MCF 10A (cell line): ENCODE measurements at regions of chr7 and their contacts with region 1.

Region 1: DNA sequence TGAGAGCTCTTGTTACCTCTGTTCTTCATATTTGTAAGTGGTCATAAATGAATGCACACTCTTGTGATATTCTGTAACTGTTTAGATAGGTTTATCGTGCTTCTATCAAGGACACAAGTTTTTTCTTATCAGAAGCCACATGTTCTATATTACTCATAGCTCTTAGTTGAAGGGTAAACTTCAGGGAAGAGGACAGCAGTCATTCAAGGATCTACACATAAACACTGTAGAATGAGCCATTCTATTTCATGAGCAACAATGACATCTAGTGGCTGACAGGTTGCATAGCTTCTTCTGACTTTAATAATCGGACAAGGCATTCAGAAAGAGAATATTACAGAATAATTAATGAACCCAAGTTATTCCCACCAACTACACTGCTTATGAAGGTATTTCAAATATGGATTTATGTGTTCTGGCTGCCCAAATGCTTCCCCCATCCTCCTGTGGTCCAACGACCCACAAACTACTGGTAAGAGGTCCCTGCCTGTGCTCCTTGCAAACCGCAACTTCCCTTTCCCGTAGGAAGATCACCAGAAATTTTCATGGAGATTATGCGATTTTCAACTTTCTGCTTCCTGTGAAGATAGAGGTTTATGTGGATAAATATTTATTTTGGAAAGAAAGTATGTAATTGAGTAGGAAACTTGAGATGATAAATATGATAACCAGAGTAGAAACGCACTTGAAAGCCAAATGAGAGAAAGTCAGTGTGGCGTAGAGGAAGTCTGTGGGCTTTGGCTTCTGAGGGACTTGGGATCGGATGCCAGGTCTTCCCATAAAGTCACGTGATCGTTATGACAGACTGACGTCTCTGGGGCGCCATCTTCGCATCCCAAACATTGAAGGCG is 16.8 kb upstream of the ABCB5 start:
- DNase-seq: peak; percentile 72
- H3K4me3 Mint-ChIP-seq: no peak overlapping the region
- H3K27ac Mint-ChIP-seq: no peak overlapping the region
- H3K4me1 Mint-ChIP-seq: peaks cover 15% of the 10 kb centered on the region
- H3K27me3 Mint-ChIP-seq: no peaks in the 10 kb centered on the region
- CTCF ChIP-seq: peak; percentile 83

Region 2: GRCh38 chr7:19713676-19714075 is 885.0 kb before region 1 on chr7:
- CTCF ChIA-PET with region 1: interaction called, 121 read pairs
- POLR2A ChIA-PET with region 1: interaction called, 9 read pairs
- intact Hi-C with region 1: loop called (anchors 1 kb)
- DNase-seq: peak; percentile 58
- H3K4me3 Mint-ChIP-seq: no peak overlapping the region
- H3K27ac Mint-ChIP-seq: no peak overlapping the region
- H3K4me1 Mint-ChIP-seq: peaks cover 16% of the 10 kb centered on the region
- H3K27me3 Mint-ChIP-seq: no peaks in the 10 kb centered on the region
- CTCF ChIP-seq: peak; percentile 47

Region 3: DNA sequence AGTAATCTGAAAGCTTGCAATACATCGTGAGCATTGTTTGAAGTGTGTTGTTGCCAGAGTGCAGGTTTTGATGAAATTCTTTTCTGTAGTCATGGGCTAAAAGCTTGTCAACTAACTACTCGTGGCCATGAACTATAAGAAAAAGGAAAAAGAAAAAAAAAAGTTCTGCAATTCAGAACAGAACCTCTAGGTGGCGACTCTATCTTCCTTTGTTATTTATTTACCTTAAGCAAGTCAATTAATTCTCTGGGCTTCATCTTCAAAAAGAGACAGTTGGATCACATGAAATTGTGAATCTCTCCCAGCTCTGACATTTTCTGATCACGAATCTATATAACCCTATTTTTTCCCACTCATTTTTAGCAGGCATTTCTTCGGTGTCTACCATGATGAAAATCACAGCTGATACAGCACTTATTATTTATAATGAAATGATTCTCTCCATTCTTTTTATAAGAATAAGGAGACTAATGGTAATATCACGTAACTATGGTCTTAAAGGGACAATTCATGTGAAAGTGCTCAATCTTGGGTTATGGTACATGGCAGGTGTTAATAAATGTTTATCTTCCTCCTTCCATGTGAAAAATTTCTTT is 844.1 kb before region 1 on chr7:
- CTCF ChIA-PET with region 1: interaction called, 50 read pairs
- POLR2A ChIA-PET with region 1: interaction called, 3 read pairs
- intact Hi-C with region 1: no loop called
- DNase-seq: peak; percentile 56
- H3K4me3 Mint-ChIP-seq: no peak overlapping the region
- H3K27ac Mint-ChIP-seq: no peak overlapping the region
- H3K4me1 Mint-ChIP-seq: peaks cover 6% of the 10 kb centered on the region
- H3K27me3 Mint-ChIP-seq: no peaks in the 10 kb centered on the region
- CTCF ChIP-seq: peak; percentile 53

Region 4: GRCh38 chr7:20310963-20311742 is 287.5 kb before region 1 on chr7:
- CTCF ChIA-PET with region 1: interaction called, 7 read pairs
- POLR2A ChIA-PET with region 1: interaction called, 6 read pairs
- intact Hi-C with region 1: loop called (anchors 1 kb)
- DNase-seq: peak; percentile 64
- H3K4me3 Mint-ChIP-seq: no peak overlapping the region
- H3K27ac Mint-ChIP-seq: no peak overlapping the region
- H3K4me1 Mint-ChIP-seq: peaks cover 12% of the 10 kb centered on the region
- H3K27me3 Mint-ChIP-seq: no peaks in the 10 kb centered on the region
- CTCF ChIP-seq: peak; percentile 65

Region 5: GRCh38 chr7:20577441-20578071 is 21.1 kb before region 1 on chr7:
- CTCF ChIA-PET with region 1: interaction called, 18 read pairs
- POLR2A ChIA-PET with region 1: no interaction called
- intact Hi-C with region 1: no loop called
- DNase-seq: no peak
- H3K4me3 Mint-ChIP-seq: no peak overlapping the region
- H3K27ac Mint-ChIP-seq: no peak overlapping the region
- H3K4me1 Mint-ChIP-seq: no peaks in the 10 kb centered on the region
- H3K27me3 Mint-ChIP-seq: no peaks in the 10 kb centered on the region
- CTCF ChIP-seq: no peak

Region 6: DNA sequence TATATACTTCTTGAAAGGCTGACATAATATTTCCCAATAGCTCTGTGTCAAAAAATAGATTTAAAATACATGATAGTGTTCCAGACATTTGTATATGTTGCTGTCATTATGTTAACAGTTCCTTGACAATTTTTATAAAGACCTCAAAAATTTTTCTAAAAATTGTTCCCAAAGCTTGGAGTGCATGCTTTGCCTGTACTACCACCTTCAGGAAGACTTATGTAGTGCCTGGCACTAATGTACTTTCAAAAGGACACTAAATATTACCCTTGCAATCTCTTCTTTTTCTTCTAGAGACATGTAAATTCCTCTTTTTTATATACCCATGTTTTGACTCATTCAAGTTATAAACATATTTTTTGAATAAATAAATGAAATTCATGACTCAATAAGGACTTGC is 236.0 kb after region 1 on chr7:
- CTCF ChIA-PET with region 1: interaction called, 9 read pairs
- POLR2A ChIA-PET with region 1: no interaction called
- intact Hi-C with region 1: loop called (anchors 5 kb)
- DNase-seq: peak; percentile 22
- H3K4me3 Mint-ChIP-seq: no peak overlapping the region
- H3K27ac Mint-ChIP-seq: no peak overlapping the region
- H3K4me1 Mint-ChIP-seq: no peaks in the 10 kb centered on the region
- H3K27me3 Mint-ChIP-seq: no peaks in the 10 kb centered on the region
- CTCF ChIP-seq: peak; percentile 36

Region 7: GRCh38 chr7:21221129-21221528 is 622.4 kb after region 1 on chr7:
- CTCF ChIA-PET with region 1: no interaction called
- POLR2A ChIA-PET with region 1: no interaction called
- intact Hi-C with region 1: no loop called
- DNase-seq: no peak
- H3K4me3 Mint-ChIP-seq: no peak overlapping the region
- H3K27ac Mint-ChIP-seq: no peak overlapping the region
- H3K4me1 Mint-ChIP-seq: no peaks in the 10 kb centered on the region
- H3K27me3 Mint-ChIP-seq: no peaks in the 10 kb centered on the region
- CTCF ChIP-seq: no peak